ENCODE measurements at regions of chr6 and their contacts with region 1.

Region 1: GRCh38 chr6:32971581-32972352 is 3.4 kb downstream of the BRD2 start:
- DNase-seq: peak; percentile 100
- ATAC-seq: peak; percentile 38
- H3K4me3 Mint-ChIP-seq: peak overlapping the region; percentile 95
- H3K27ac Mint-ChIP-seq: peak overlapping the region; percentile 99
- H3K4me1 Mint-ChIP-seq: peaks cover 23% of the 10 kb centered on the region
- H3K27me3 Mint-ChIP-seq: no peaks in the 10 kb centered on the region
- CTCF ChIP-seq: no peak

Region 2: DNA sequence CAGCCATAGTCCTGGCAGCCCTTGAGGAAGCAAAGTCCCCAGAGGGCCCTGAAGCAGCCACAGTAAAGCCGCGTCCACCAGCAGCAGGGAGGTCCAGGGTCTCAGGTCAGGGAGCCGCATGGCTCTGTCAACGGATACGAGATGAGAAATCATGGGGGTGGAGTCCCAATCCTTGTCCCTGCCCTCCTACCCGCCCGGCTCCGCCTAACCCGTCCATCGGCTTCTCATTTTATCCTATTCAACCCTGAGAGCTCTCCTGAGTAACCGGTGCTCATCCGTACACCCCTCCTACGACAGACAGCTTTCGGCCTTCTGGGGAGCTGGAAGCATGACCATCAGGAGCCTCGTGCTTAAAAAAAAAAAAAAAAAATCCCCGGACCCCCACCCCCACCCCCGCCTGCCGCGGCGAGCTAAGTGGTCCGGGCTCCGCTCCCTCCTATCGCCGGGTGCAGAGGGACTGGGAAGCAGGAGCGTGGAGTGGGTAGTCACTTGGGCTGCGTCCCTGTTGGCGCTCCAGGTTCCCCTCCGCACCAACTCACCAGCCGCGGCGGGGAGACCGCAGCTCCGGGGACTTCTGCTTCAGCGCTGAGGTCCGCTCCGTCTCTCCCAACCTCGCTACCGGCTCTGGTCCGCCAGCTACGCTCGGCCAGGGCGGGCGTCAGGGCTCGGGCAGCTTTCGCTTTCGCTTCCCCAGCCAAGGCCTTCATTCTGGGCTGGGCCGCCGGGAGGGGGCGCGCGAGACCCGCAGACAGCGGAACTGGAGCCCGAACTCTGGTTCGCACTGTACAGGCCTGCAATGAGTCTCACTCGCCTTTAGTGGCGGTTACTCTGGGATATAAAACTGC is 133.4 kb before region 1 on chr6 and contains the start of gene TAP2:
- CTCF ChIA-PET with region 1: interaction called, 28 read pairs
- POLR2A ChIA-PET with region 1: interaction called, 156 read pairs
- intact Hi-C with region 1: no loop called
- DNase-seq: peak; percentile 98
- ATAC-seq: peak; percentile 82
- H3K4me3 Mint-ChIP-seq: peak within 1 kb of the TSS; percentile 79
- H3K27ac Mint-ChIP-seq: peak within 1 kb of the TSS; percentile 99
- H3K4me1 Mint-ChIP-seq: peaks cover 74% of the 10 kb centered on the region
- H3K27me3 Mint-ChIP-seq: no peaks in the 10 kb centered on the region
- CTCF ChIP-seq: peak; percentile 95
- total RNA-seq, gene TAP2: 110 to 113 TPM

Region 3: DNA sequence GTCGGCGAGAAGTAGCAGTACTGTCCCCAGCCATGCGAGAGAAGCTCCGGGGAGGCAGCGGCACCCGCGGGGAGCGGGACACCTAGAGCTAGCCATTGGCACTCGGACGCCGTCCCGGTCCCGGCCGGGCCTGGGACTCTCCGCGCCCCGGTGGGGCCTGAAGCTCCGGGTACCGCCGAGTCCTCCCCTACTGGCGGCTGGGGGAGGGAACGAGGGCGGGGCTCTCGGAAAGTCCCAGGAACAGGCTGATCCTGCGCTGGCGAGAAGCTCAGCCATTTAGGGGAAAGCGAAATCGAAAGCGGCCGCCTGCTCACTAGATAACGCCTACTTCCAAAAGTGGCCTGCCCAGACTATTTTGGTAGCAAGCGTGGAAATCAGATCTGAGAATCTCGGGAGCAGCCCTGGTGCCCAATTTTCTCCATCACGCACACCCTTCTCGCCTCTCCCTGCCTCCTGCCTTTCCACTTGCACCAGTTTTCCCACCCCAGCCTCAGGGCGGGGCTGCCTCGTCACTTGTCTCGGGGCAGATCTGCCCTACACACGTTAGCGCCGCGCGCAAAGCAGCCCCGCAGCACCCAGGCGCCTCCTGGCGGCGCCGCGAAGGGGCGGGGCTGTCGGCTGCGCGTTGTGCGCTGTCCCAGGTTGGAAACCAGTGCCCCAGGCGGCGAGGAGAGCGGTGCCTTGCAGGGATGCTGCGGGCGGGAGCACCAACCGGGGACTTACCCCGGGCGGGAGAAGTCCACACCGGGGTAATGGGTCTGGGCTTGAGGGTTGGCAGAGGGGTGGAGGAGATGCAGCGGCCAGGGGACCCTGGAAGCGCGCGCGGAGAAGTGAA is 118.0 kb before region 1 on chr6 and contains the starts of genes PSMB9 and TAP1:
- CTCF ChIA-PET with region 1: interaction called, 19 read pairs
- POLR2A ChIA-PET with region 1: interaction called, 171 read pairs
- intact Hi-C with region 1: no loop called
- DNase-seq: peak; percentile 99
- ATAC-seq: peak; percentile 84
- H3K4me3 Mint-ChIP-seq: peak within 1 kb of the TSS; percentile 94
- H3K27ac Mint-ChIP-seq: peak within 1 kb of the TSS; percentile 100
- H3K4me1 Mint-ChIP-seq: peaks cover 52% of the 10 kb centered on the region
- H3K27me3 Mint-ChIP-seq: no peaks in the 10 kb centered on the region
- CTCF ChIP-seq: peak; percentile 67
- total RNA-seq, gene PSMB9: 219 to 229 TPM
- total RNA-seq, gene TAP1: 210 to 211 TPM

Region 4: DNA sequence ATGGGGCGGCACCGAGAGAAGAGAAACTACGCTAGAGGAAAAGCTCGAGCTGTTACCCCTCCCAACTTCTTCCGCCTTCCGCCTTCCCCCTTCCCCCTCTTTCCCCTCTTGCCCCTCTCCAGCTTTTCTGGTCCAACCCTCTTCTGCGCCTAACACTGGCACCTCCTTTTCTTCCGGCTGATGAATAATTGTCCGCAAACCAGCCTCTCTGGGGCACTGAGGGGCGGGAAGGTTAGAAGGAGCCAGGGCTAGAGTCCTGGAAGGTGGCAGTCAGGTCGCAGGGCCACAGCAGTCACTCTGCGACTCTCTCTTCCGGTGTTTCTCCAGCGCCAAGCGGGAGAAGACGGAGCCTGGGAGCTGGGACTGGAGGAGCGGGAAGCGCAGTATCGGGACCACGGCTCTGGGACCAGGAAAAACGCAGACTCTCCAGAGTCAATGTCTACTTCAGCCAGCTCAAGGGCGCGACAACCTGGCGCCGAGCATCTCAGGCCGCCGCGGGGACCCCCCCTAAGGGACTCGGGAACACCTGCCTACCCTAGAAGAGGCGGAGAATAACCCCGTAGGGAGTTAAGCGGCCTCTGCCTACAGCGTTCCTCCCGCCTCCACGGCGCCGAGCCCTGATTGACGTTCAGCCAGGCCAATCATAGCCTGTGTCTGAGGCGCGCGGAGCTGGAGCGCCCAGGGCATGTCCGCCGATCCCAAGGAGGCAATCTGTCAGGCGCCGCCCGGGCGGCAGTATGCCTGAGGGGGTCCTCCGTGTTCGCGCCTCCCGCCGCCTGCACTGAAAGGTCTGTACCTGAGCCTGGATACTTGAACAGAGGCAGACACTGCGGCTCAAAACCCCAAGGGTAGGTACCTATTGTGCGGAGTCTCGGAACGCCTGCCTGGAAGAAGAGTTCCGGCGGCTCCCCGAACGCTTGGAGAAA is 77.4 kb before region 1 on chr6:
- CTCF ChIA-PET with region 1: interaction called, 6 read pairs
- POLR2A ChIA-PET with region 1: interaction called, 109 read pairs
- intact Hi-C with region 1: no loop called
- DNase-seq: peak; percentile 95
- ATAC-seq: peak; percentile 99
- H3K4me3 Mint-ChIP-seq: peak overlapping the region; percentile 96
- H3K27ac Mint-ChIP-seq: peak overlapping the region; percentile 96
- H3K4me1 Mint-ChIP-seq: peaks cover 35% of the 10 kb centered on the region
- H3K27me3 Mint-ChIP-seq: no peaks in the 10 kb centered on the region
- CTCF ChIP-seq: no peak

Region 5: DNA sequence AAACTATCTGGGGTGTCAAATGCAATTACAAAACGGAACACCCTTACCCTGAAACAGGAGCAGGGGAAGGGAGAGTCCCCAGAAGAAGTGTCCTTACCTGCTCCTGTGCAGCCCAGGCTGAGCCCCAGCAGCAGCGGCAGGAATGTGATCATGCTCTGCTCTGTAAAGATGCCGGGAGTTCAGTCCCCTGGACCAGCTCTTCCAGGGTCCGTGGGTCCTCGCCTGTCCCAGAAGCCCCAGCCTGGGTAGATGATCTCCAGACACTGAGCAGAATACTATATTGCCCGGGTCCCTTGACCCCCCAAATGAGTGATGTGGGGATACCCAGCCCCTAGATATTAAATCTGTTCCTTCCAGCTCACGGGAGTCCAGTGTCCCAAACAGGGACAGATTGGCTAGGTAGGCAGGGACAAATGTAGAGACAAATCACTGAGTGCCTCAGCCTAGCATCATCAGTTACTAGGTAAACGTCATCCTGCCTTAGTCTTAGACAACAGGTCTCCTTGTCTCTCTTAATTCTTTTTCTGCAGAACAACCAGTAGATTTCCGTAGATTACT is 31.0 kb before region 1 on chr6 and contains the start of gene HLA-DMB:
- CTCF ChIA-PET with region 1: interaction called, 364 read pairs
- POLR2A ChIA-PET with region 1: interaction called, 392 read pairs
- intact Hi-C with region 1: loop called (anchors 2 kb)
- DNase-seq: peak; percentile 69
- ATAC-seq: peak; percentile 76
- H3K4me3 Mint-ChIP-seq: peak within 1 kb of the TSS; percentile 77
- H3K27ac Mint-ChIP-seq: peak within 1 kb of the TSS; percentile 97
- H3K4me1 Mint-ChIP-seq: peaks cover 64% of the 10 kb centered on the region
- H3K27me3 Mint-ChIP-seq: no peaks in the 10 kb centered on the region
- CTCF ChIP-seq: no peak
- total RNA-seq, gene HLA-DMB: 3.5 to 3.6 TPM

Region 6: DNA sequence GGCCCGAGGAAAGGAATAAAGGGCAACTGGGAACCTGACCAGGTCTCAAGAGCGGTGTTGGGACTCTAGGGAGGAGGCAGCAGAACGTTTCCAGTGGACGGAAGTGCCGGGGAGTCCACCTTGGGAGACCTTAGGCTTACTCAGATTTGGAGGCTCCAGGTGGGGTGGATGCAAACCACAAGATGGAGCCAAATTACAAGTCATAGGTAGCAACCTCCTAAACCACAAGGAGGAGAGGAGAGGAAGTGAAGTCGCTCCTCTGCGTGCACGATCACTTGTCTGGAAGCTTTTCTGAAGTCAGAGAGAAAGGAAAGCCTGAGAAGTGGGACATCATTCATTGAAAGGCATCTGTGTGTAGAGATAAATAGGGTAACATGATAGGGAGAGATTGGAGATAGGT is 28.3 kb after region 1 on chr6:
- CTCF ChIA-PET with region 1: interaction called, 3 read pairs
- POLR2A ChIA-PET with region 1: interaction called, 12 read pairs
- intact Hi-C with region 1: no loop called
- DNase-seq: peak; percentile 55
- ATAC-seq: peak; percentile 70
- H3K4me3 Mint-ChIP-seq: no peak overlapping the region
- H3K27ac Mint-ChIP-seq: no peak overlapping the region
- H3K4me1 Mint-ChIP-seq: peaks cover 6% of the 10 kb centered on the region
- H3K27me3 Mint-ChIP-seq: peaks cover 11% of the 10 kb centered on the region
- CTCF ChIP-seq: peak; percentile 31

Region 7: DNA sequence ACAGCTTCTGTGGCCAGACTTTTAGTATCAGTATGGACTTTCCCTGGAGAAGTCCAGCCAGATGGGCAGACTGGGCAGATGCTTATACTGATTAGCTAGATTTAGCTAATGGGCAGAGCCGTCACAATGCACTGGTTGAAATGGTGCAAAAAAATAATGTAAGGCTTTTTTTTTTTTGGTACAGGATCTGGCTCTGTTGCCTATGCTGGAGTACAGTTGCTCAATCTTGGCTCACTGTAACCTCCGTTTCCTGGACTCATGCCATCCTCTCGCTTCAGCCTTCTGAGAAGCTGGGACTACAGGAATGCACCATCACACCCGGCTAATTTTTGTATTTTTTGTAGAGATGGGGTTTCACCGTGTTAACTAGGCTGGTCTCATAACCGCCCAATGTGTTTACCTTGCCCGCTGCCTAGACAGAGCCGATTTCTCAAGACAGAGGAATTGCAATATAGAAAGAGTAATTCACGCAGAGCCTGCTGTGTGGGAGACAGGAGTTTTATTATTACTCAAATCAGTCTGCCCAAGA is 403.4 kb after region 1 on chr6:
- CTCF ChIA-PET with region 1: no interaction called
- POLR2A ChIA-PET with region 1: no interaction called
- intact Hi-C with region 1: no loop called
- DNase-seq: no peak
- ATAC-seq: no peak
- H3K4me3 Mint-ChIP-seq: no peak overlapping the region
- H3K27ac Mint-ChIP-seq: no peak overlapping the region
- H3K4me1 Mint-ChIP-seq: peaks cover 12% of the 10 kb centered on the region
- H3K27me3 Mint-ChIP-seq: no peaks in the 10 kb centered on the region
- CTCF ChIP-seq: no peak

Region 8: DNA sequence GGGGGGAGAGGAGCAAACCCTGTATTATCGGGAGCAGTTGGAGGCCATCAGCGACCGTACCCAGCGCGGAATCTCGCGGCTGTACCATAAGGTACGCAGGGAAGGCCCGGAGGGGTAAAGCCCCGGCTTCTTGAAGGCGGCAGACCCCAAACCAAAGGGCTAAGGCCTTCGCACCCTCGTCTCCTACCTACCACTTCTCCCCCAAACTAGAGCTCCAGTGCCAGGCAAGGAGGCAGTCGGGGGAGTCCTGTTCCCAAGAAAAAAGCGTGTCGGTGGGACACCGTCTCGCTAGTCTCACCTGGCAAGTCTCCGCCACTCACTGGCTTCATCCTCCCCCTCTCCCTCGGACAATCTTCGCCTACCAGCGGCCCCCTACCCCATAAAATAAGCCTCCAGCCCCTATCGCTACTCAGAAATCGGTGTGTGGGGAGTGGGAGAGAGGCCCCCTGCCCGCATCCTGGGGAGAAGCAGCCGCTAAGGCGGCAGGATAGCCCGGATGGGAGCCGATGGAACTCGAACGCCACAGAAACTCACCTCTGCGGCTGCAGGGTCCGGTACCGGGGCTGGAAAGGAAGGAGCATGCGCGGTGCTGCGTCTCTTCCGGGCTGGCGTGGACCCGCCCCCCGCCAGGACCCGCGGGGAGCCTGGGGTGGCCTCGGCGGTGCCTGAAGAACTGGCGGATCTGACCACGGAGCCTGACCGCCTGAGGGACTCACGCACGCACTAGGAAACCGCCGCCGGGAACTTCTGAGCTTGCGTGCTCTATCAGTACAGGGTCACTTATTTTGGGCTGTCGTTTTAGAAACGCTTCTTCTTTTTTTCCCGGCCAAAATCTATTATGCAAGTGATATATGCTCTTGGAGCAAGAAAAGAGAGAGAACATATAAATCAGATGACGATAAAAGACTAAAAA is 1454.0 kb after region 1 on chr6 and contains the start of gene RPS10:
- CTCF ChIA-PET with region 1: no interaction called
- POLR2A ChIA-PET with region 1: no interaction called
- intact Hi-C with region 1: no loop called
- DNase-seq: peak; percentile 92
- ATAC-seq: peak; percentile 98
- H3K4me3 Mint-ChIP-seq: peak within 1 kb of the TSS; percentile 98
- H3K27ac Mint-ChIP-seq: peak within 1 kb of the TSS; percentile 100
- H3K4me1 Mint-ChIP-seq: peaks cover 33% of the 10 kb centered on the region
- H3K27me3 Mint-ChIP-seq: peaks cover 2% of the 10 kb centered on the region
- CTCF ChIP-seq: no peak
- total RNA-seq, gene RPS10: 2,208 to 2,269 TPM

Measured in activated CD8-positive, alpha-beta T cell treated with anti-CD3 and anti-CD28 coated beads for 36 hours (primary cell).